ENCODE measurements at regions of chr1 and their contacts with region 1.

Region 1: GRCh38 chr1:9942939-9943788 is at the starts of genes LZIC and NMNAT1:
- DNase-seq: peak; percentile 84 to 90 (median 85)
- H3K4me3 ChIP-seq: peak within 1 kb of the TSS; percentile 91 to 100
- H3K4me3 Mint-ChIP-seq: peak within 1 kb of the TSS; percentile 94 to 97 (median 97)
- H3K27ac ChIP-seq: peak within 1 kb of the TSS; percentile 92
- H3K27ac Mint-ChIP-seq: peak within 1 kb of the TSS; percentile 89 to 99 (median 98)
- H3K4me1 ChIP-seq: peaks cover 18% of the 10 kb centered on the region
- H3K4me1 Mint-ChIP-seq: peaks cover 11 to 35% (median 21%) of the 10 kb centered on the region in 4 donors
- H3K27me3 ChIP-seq: no peaks in the 10 kb centered on the region
- H3K27me3 Mint-ChIP-seq: no peaks in the 10 kb centered on the region
- total RNA-seq, gene LZIC: 34.0 to 34.8 TPM
- total RNA-seq, gene NMNAT1: 6.1 to 6.7 TPM

Region 2: GRCh38 chr1:9910425-9911178 is 32.6 kb before region 1 on chr1:
- CTCF ChIA-PET with region 1: interaction called, 3 read pairs
- POLR2A ChIA-PET with region 1: interaction called, 12 read pairs
- intact Hi-C with region 1: loop called (anchors 2 kb)
- DNase-seq: peak; percentile 100
- H3K4me3 ChIP-seq: peak overlapping the region; percentile 71 to 78
- H3K4me3 Mint-ChIP-seq: peak overlapping the region; percentile 92 to 99 (median 96)
- H3K27ac ChIP-seq: peak overlapping the region; percentile 64
- H3K27ac Mint-ChIP-seq: peak overlapping the region; percentile 85 to 99 (median 98)
- H3K4me1 ChIP-seq: peaks cover 16% of the 10 kb centered on the region
- H3K4me1 Mint-ChIP-seq: peaks cover 27 to 39% (median 34%) of the 10 kb centered on the region in 4 donors
- H3K27me3 ChIP-seq: no peaks in the 10 kb centered on the region
- H3K27me3 Mint-ChIP-seq: no peaks in the 10 kb centered on the region